A549 (cell line): ENCODE measurements at regions of chr16 and their contacts with region 1.

Region 1: GRCh38 chr16:66515596-66516510 is 34.1 kb downstream of the TK2 start:
- DNase-seq: peak; percentile 44 to 81
- ATAC-seq: peak; percentile 30 to 58
- H3K4me3 ChIP-seq: peak overlapping the region; percentile 18; the same call in 1 of the 3 replicates
- H3K27ac ChIP-seq: peak overlapping the region; percentile 92 to 95
- H3K4me1 ChIP-seq: peaks cover 64% of the 10 kb centered on the region
- CTCF ChIP-seq: peak; percentile 70
- EP300 ChIP-seq: peak in 1 of 2 experiments; percentile 15; a peak in 1 of 5 replicates
- POLR2A ChIP-seq: no peak
- RAD21 ChIP-seq: peak; percentile 81 to 90

Region 2: DNA sequence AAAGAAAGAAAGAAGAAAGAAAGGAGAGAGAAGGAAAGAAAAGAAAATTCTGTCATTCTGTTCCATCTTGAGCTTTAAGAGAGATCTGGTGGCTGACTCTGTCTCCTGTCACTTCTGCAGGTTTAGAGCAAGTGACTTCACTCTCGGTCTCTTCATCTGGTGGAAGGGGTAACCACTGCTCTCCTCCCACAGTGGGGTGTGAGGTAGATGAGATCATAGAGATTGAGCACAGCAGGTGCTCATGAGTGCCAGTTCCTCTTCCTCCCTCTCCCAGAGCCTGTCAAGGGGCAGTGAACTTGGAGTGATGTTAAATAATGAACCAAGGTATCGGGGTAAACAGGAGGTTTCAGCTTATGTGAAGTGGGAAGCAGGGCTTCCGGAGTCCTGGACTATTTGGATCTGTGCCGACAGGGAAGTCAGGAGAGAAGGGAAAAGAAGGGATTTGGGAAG is 41.1 kb before region 1 on chr16:
- CTCF ChIA-PET with region 1: interaction called, 13 read pairs
- POLR2A ChIA-PET with region 1: no interaction called
- DNase-seq: no peak
- ATAC-seq: no peak
- H3K4me3 ChIP-seq: no peak overlapping the region
- H3K27ac ChIP-seq: peak overlapping the region in 1 of 2 experiments; percentile 32; a peak in 2 of 6 replicates
- H3K4me1 ChIP-seq: peaks cover 18% of the 10 kb centered on the region
- CTCF ChIP-seq: no peak
- EP300 ChIP-seq: no peak
- POLR2A ChIP-seq: no peak
- RAD21 ChIP-seq: no peak

Region 3: DNA sequence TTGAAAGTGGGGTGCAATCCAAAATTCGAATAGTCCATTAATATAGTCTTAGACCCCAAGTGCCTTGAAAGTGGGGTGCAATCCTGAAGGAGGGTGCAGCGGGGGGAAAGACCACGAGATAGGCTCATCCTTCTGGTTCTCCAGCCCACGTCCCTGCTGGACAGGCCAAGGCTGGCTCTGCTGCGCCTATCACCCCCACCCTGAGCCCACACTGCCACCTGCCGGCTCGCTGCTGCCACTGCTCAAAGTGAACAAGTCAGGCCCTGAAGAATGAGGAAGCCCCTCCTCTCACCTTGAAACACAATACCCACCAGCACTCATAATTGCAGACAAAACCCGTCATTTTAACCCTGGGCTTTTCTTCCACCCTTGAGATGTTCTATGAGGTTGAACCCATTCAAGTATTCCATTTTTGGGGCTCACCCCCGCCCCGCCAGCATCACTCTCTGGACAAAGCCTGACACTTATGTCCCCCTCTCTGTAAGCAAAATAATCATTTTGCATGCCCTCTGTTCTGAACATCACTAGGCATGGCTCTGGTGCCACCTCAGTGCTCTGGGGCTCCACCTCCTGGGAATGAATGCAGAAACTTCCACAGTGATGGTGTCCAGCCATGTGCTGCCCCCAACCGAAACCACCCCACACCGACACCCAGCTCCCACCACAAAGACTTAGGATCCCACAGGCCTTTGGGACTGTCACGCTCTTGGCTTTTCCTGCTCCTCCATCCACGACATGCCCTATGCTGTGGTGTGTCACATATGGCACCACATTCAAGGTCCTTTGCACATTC is 32.0 kb before region 1 on chr16:
- CTCF ChIA-PET with region 1: interaction called, 16 read pairs
- POLR2A ChIA-PET with region 1: interaction called, 3 read pairs
- DNase-seq: peak; percentile 80
- ATAC-seq: peak; percentile 71 to 89
- H3K4me3 ChIP-seq: no peak overlapping the region
- H3K27ac ChIP-seq: peak overlapping the region; percentile 64 to 79; a peak in 5 of 6 replicates
- H3K4me1 ChIP-seq: peaks cover 26% of the 10 kb centered on the region
- CTCF ChIP-seq: peak; percentile 92
- EP300 ChIP-seq: no peak
- POLR2A ChIP-seq: no peak
- RAD21 ChIP-seq: peak; percentile 91 to 93

Region 4: GRCh38 chr16:66552286-66553177 is 36.7 kb after region 1 on chr16 and contains the start of gene CKLF:
- CTCF ChIA-PET with region 1: interaction called, 12 read pairs
- POLR2A ChIA-PET with region 1: interaction called, 8 read pairs
- DNase-seq: peak; percentile 90 to 92
- ATAC-seq: peak; percentile 72 to 81
- H3K4me3 ChIP-seq: peak within 1 kb of the TSS; percentile 51
- H3K27ac ChIP-seq: peak within 1 kb of the TSS; percentile 90 to 91
- H3K4me1 ChIP-seq: peaks cover 40% of the 10 kb centered on the region
- CTCF ChIP-seq: no peak
- EP300 ChIP-seq: no peak
- POLR2A ChIP-seq: peak; percentile 80
- RAD21 ChIP-seq: no peak
- polyA plus RNA-seq, gene CKLF: 85.1 and 96.5 TPM in 2 replicates